ENCODE measurements at regions of chr2 and their contacts with region 1.

Region 1: DNA sequence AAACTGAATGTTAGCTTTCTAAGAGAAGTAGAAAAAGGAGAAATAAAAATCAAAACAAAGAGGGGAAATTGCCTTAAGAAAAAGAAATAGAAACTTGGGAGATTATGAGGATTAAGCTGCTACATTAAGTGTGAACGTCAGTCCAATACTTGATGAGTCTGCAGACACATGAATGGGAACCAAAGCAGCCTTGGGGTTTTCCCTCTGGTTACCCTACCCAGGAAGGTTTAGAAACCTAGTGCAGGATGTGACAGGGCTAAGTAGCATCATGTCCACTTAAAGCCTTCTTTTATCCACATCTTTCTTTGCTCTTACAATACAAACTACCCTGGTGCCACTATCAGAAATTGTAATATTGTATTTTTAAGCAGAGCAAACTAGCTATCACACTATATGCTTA is 22.3 kb downstream of the SLC35F5 start:
- DNase-seq: no peak
- H3K4me3 ChIP-seq: no peak overlapping the region
- H3K27ac ChIP-seq: no peak overlapping the region
- H3K4me1 ChIP-seq: no peaks in the 10 kb centered on the region
- H3K27me3 ChIP-seq: no peaks in the 10 kb centered on the region
- CTCF ChIP-seq: no peak

Region 2: DNA sequence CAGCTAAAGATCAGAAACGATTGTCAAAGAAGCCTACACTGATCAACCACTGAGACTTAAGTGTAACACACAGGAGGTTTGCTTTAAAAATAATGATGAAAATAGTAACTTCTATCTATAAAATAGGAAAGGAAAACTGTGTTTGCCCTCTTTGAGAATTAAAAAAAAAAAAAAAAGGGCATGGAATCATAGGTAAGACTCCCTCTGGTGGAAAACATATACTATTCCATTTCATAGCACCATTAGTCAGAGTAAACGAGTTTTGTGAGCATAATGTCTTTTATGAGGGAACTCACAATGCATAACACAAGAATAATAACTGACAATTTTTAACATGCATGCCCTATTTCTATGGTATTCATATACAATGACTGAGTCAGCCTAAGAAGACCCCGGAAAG is 14.0 kb before region 1 on chr2:
- CTCF ChIA-PET with region 1: no interaction called
- POLR2A ChIA-PET with region 1: interaction called, 11 read pairs
- intact Hi-C with region 1: no loop called
- DNase-seq: peak in 1 of 2 experiments; percentile 41
- H3K4me3 ChIP-seq: no peak overlapping the region
- H3K27ac ChIP-seq: no peak overlapping the region
- H3K4me1 ChIP-seq: no peaks in the 10 kb centered on the region
- H3K27me3 ChIP-seq: no peaks in the 10 kb centered on the region
- CTCF ChIP-seq: peak; percentile 65

Region 3: GRCh38 chr2:113756355-113757137 is 22.4 kb after region 1 on chr2 and contains the start of gene SLC35F5:
- CTCF ChIA-PET with region 1: no interaction called
- POLR2A ChIA-PET with region 1: no interaction called
- intact Hi-C with region 1: no loop called
- DNase-seq: peak; percentile 74 to 93
- H3K4me3 ChIP-seq: peak within 1 kb of the TSS; percentile 89
- H3K27ac ChIP-seq: peak within 1 kb of the TSS; percentile 74
- H3K4me1 ChIP-seq: peaks cover 19% of the 10 kb centered on the region
- H3K27me3 ChIP-seq: no peaks in the 10 kb centered on the region
- CTCF ChIP-seq: no peak
- total RNA-seq, gene SLC35F5: 41.6 and 43.5 TPM in 2 replicates

Region 4: DNA sequence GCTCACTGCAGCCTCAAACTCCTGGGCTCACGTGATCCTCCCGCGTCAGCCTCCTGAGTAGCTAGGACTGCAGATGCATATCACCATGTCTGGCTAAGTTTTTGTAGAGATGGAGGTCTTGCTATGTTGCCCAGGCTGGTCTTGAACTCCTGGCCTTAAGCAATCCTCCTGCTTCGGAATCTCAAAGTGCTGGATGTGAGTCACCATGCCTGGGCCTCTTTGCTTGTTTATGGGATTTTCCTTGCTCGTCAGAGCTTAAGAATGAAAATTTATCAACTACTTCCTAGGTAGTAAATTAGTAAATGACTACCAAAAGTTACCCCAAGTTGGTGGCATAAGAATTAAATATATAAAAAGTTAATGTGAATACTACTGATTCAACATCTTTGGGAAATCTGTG is 206.7 kb after region 1 on chr2:
- CTCF ChIA-PET with region 1: no interaction called
- POLR2A ChIA-PET with region 1: no interaction called
- intact Hi-C with region 1: loop called (anchors 10 kb)
- DNase-seq: no peak
- H3K4me3 ChIP-seq: no peak overlapping the region
- H3K27ac ChIP-seq: no peak overlapping the region
- H3K4me1 ChIP-seq: no peaks in the 10 kb centered on the region
- H3K27me3 ChIP-seq: no peaks in the 10 kb centered on the region
- CTCF ChIP-seq: no peak

Measured in PC-9 (cell line).